ENCODE measurements at regions of chr9 and their contacts with region 1.

Region 1: DNA sequence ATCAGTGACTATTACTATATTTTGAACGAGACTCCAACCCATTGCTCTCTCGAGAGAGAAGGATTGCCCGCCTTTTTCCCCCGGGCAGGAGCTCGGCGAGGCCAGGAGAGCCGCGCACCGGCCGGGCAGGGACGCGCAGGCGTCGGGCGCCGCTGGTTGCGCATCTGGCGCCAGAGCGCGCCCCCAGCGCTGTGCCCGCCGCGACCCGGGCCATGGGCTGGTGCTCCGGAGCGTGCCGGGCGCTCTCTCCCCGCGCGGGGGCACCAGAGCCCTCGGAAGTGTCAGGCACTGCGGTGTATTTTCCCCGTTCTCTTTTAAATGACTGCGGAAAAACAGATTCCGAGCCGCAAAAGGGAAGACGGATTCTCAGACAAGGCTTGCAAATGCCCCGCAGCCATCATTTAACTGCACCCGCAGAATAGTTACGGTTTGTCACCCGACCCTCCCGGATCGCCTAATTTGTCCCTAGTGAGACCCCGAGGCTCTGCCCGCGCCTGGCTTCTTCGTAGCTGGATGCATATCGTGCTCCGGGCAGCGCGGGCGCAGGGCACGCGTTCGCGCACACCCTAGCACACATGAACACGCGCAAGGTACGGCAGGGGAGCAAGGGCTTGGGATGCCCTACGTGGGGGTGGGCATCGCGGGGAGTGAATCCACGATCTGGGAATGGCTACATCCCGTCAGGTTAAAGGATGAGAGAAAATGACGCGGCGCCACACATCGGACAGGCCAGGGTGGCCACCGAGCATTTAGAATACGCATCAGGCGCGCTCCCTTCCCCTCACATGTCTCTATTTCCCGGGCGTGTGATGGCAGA is 1.1 kb upstream of the NTRK2 start:
- DNase-seq: peak; percentile 34 to 66
- H3K4me3 ChIP-seq: no peak overlapping the region
- H3K4me1 ChIP-seq: no peaks in the 10 kb centered on the region
- H3K27me3 ChIP-seq: peaks cover 53% of the 10 kb centered on the region

Region 2: GRCh38 chr9:85172001-85172978 is 503.9 kb after region 1 on chr9:
- in situ Hi-C with region 1: no loop called
- DNase-seq: no peak
- H3K4me3 ChIP-seq: no peak overlapping the region
- H3K4me1 ChIP-seq: peaks cover under 1% of the 10 kb centered on the region
- H3K27me3 ChIP-seq: no peaks in the 10 kb centered on the region

Region 3: GRCh38 chr9:85420750-85421149 is 752.3 kb after region 1 on chr9:
- in situ Hi-C with region 1: loop called (anchors 25 kb)
- DNase-seq: no peak
- H3K4me3 ChIP-seq: no peak overlapping the region
- H3K4me1 ChIP-seq: no peaks in the 10 kb centered on the region
- H3K27me3 ChIP-seq: peaks cover 3% of the 10 kb centered on the region; the same call in 1 of the 2 replicates